Activated B cell treated with CpG ODN at 0.5 μM for 24 hours (primary cell): ENCODE measurements at regions of chr11 and their contacts with region 1.

Region 1: GRCh38 chr11:34174412-34175041 is 69.1 kb downstream of the NAT10 start:
- DNase-seq: peak; percentile 75
- ATAC-seq: peak; percentile 99
- H3K4me3 Mint-ChIP-seq: peak overlapping the region; percentile 63
- H3K27ac Mint-ChIP-seq: no peak overlapping the region
- H3K4me1 Mint-ChIP-seq: peaks cover 36% of the 10 kb centered on the region
- H3K27me3 Mint-ChIP-seq: no peaks in the 10 kb centered on the region
- CTCF ChIP-seq: no peak

Region 2: DNA sequence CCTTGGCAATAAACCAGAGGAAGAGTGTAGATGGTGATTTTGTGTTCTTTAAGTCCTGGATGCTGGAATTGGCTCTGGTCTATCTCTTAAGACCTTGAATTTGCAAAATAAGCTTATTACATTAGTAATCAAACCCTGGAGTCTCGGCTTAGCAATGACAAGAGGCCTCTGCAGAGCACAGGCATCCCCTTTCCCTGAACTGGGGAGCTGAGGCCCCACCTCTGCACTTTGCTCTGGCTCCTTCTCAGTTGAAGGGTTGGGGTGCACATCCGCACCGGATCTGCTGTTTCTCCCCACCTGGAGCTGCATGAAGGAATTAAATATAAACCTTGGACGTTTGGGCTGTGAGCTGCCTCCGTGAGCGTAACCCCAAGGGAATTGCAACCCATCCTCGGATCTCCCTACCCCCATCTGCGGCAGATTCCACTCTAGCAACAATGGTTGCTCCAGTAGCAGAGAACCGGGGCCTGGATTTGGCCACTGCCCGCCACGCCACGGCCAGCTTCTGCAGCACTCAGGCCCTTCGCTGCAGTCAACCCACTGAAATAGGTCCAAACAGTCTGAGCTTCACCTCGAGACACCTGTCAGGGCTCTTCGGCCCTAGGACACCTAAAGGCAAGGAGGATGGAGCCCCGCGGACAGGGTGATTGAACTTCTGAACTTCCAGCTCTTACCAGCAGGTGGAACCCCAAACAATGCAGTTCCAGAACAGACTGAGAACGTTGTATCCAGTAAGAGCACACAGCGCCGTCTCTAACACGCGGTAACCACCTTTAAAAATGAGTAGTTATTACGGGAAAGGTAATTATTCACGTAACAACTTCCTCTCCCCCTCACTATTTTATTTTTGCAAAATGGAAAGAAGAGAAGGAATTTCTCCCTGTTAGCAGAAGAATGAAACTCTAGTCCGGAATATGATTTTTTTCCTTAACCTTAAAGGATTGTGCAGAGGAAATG is 177.8 kb before region 1 on chr11:
- CTCF ChIA-PET with region 1: interaction called, 17 read pairs
- POLR2A ChIA-PET with region 1: interaction called, 3 read pairs
- intact Hi-C with region 1: loop called (anchors 1 kb)
- DNase-seq: peak; percentile 41
- ATAC-seq: peak; percentile 98
- H3K4me3 Mint-ChIP-seq: peak overlapping the region; percentile 36
- H3K27ac Mint-ChIP-seq: no peak overlapping the region
- H3K4me1 Mint-ChIP-seq: peaks cover 10% of the 10 kb centered on the region
- H3K27me3 Mint-ChIP-seq: peaks cover 19% of the 10 kb centered on the region
- CTCF ChIP-seq: peak; percentile 40

Region 3: DNA sequence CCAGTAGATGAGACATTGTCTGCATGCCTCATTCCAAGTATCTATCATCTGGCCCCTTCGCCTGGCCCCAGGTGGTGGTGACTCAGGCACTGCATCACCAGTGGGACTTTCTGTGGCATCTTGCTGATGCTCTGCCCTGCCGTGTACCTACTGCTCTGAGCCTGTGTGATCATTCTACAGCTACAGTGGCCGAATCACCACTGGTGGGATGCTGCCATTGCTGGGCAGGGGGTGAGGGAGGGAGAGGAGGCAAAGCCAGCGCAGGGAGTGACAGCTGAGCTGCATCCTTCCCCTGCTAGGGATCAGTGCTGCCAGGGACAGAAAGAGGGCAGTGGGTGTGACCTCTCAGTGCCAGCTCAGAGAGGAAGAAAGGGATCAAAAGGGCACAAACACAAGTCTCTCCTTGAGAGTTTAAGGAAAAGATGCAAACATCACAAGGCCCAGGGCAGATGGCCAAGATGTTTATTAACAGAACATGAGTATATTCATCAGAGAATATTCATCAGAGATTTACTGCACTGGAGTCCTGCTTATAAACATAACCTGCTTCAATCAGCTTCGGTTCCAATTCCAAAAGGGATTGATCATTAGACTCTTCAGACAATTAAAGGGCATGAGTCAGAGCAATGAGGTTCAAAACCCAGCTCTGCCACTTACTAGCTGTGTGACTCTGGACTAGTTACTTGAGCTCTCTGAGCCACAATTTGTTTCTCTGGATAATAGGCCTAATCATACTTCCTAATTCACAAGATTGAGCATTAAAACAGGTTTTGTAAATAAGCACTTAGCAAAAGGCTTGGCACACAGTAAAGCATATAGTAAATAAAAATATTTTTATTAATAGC is 40.7 kb after region 1 on chr11:
- CTCF ChIA-PET with region 1: interaction called, 5 read pairs
- POLR2A ChIA-PET with region 1: interaction called, 3 read pairs
- intact Hi-C with region 1: loop called (anchors 2 kb)
- DNase-seq: peak; percentile 30
- ATAC-seq: peak; percentile 95
- H3K4me3 Mint-ChIP-seq: peak overlapping the region; percentile 49
- H3K27ac Mint-ChIP-seq: peak overlapping the region; percentile 81
- H3K4me1 Mint-ChIP-seq: peaks cover 32% of the 10 kb centered on the region
- H3K27me3 Mint-ChIP-seq: no peaks in the 10 kb centered on the region
- CTCF ChIP-seq: no peak

Region 4: GRCh38 chr11:34250732-34251639 is 76.5 kb after region 1 on chr11:
- CTCF ChIA-PET with region 1: interaction called, 24 read pairs
- POLR2A ChIA-PET with region 1: interaction called, 7 read pairs
- intact Hi-C with region 1: loop called (anchors 2 kb)
- DNase-seq: peak; percentile 63
- ATAC-seq: peak; percentile 98
- H3K4me3 Mint-ChIP-seq: peak overlapping the region; percentile 55
- H3K27ac Mint-ChIP-seq: peak overlapping the region; percentile 71
- H3K4me1 Mint-ChIP-seq: peaks cover 55% of the 10 kb centered on the region
- H3K27me3 Mint-ChIP-seq: no peaks in the 10 kb centered on the region
- CTCF ChIP-seq: no peak

Region 5: GRCh38 chr11:34366522-34366921 is 192.0 kb after region 1 on chr11:
- CTCF ChIA-PET with region 1: interaction called, 24 read pairs
- POLR2A ChIA-PET with region 1: interaction called, 4 read pairs
- intact Hi-C with region 1: no loop called
- DNase-seq: no peak
- ATAC-seq: no peak
- H3K4me3 Mint-ChIP-seq: no peak overlapping the region
- H3K27ac Mint-ChIP-seq: no peak overlapping the region
- H3K4me1 Mint-ChIP-seq: peaks cover under 1% of the 10 kb centered on the region
- H3K27me3 Mint-ChIP-seq: peaks cover 20% of the 10 kb centered on the region
- CTCF ChIP-seq: no peak

Region 6: DNA sequence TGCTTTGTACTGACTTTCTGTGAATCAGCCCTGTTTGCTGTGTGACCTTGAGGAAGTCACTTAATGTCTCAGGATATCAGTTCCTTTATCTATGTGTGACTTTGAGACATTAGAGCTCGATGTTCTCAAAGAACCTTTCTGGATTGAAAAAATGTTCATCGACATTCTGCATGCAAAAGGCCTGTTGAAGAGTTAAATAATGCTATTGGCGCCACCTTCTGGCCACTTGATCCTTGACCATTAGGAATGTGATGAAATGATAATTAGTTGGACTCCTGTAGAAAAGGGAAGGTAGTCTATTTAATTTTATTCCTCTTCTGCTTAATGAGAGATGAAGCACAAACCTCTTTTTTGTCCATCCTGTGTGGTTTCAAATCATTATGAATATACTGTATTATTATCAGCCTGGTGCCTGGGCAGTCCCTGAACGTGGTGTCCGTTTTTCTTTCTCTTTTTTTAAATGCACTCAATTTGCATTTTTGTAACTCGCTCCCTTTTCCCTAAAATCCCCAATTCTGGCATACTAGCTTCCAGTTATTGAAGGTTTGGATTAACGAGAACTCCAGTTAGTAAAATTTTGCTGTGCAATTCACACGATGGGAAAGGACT is 318.4 kb after region 1 on chr11:
- CTCF ChIA-PET with region 1: interaction called, 8 read pairs
- POLR2A ChIA-PET with region 1: no interaction called
- intact Hi-C with region 1: loop called (anchors 1 kb)
- DNase-seq: no peak
- ATAC-seq: no peak
- H3K4me3 Mint-ChIP-seq: no peak overlapping the region
- H3K27ac Mint-ChIP-seq: no peak overlapping the region
- H3K4me1 Mint-ChIP-seq: no peaks in the 10 kb centered on the region
- H3K27me3 Mint-ChIP-seq: peaks cover 5% of the 10 kb centered on the region
- CTCF ChIP-seq: peak; percentile 65